Panc1 (cell line): ENCODE measurements at regions of chr6 and their contacts with region 1.

Region 1: GRCh38 chr6:73323323-73323722 is 30.8 kb downstream of the DPPA5 start:
- DNase-seq: no peak
- ATAC-seq: peak; percentile 25; the same call in 1 of the 2 replicates
- H3K4me3 ChIP-seq: no peak overlapping the region
- H3K27ac ChIP-seq: no peak overlapping the region
- H3K4me1 ChIP-seq: no peaks in the 10 kb centered on the region
- H3K27me3 ChIP-seq: no peaks in the 10 kb centered on the region
- CTCF ChIP-seq: no peak

Region 2: GRCh38 chr6:72476051-72476450 is 847.3 kb before region 1 on chr6:
- CTCF ChIA-PET with region 1: no interaction called
- POLR2A ChIA-PET with region 1: no interaction called
- in situ Hi-C with region 1: no loop called
- intact Hi-C with region 1: no loop called
- DNase-seq: no peak
- ATAC-seq: no peak
- H3K4me3 ChIP-seq: no peak overlapping the region
- H3K27ac ChIP-seq: no peak overlapping the region
- H3K4me1 ChIP-seq: no peaks in the 10 kb centered on the region
- H3K27me3 ChIP-seq: no peaks in the 10 kb centered on the region
- CTCF ChIP-seq: no peak

Region 3: GRCh38 chr6:73388800-73389512 is 65.6 kb after region 1 on chr6:
- CTCF ChIA-PET with region 1: interaction called, 8 read pairs
- POLR2A ChIA-PET with region 1: interaction called, 11 read pairs
- in situ Hi-C with region 1: no loop called
- intact Hi-C with region 1: no loop called
- DNase-seq: peak; percentile 67
- ATAC-seq: peak; percentile 93
- H3K4me3 ChIP-seq: peak overlapping the region; percentile 52 to 88
- H3K27ac ChIP-seq: peak overlapping the region; percentile 87
- H3K4me1 ChIP-seq: peaks cover 8% of the 10 kb centered on the region; the same call in 1 of the 2 replicates
- H3K27me3 ChIP-seq: no peaks in the 10 kb centered on the region
- CTCF ChIP-seq: peak; percentile 98